T-cell (primary cell): ENCODE measurements at regions of chr5 and their contacts with region 1.

Region 1: GRCh38 chr5:6659941-6660684 is 26.9 kb downstream of the SRD5A1 start:
- DNase-seq: no peak
- ATAC-seq: no peak
- H3K4me3 ChIP-seq: no peak overlapping the region
- H3K4me3 Mint-ChIP-seq: peak overlapping the region in 1 of 3 donors; percentile 47
- H3K27ac ChIP-seq: no peak overlapping the region
- H3K27ac Mint-ChIP-seq: no peak overlapping the region
- H3K4me1 ChIP-seq: no peaks in the 10 kb centered on the region
- H3K4me1 Mint-ChIP-seq: peaks cover 0 to 4% (median 0%) of the 10 kb centered on the region in 3 donors
- H3K27me3 ChIP-seq: no peaks in the 10 kb centered on the region
- H3K27me3 Mint-ChIP-seq: no peaks in the 10 kb centered on the region

Region 2: DNA sequence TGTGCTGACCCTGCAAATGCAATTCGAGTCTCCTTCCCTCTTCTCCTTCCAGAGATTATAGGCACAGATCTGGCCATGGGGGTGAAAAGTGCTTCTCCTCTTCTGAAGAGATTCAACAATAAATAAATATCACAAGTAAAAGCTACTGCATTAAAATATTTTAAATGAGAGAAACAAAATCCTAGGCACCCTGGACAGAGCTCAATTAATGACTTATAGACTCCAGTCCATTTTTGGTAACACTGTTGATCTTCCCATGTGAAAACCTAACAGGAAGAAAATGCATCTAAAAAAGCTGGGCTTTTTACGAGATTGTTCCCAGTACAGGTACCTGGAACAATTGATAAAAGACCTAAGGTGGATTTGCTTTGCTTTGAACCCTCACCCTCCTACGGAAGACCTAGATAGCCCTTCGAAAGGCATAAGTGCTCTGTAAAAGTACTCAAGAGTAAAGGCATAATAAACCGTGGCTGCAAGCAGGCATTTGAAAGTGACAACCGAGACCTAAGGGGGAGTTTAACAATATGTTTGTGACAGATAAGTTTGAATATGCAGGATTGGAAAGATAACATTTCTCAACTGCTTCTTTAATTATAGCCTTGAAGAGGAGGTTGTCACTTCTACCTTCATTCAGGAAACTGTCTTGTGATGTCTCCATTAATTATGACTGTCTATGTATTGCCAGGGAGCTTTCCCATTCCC is 252.4 kb before region 1 on chr5:
- CTCF ChIA-PET with region 1: interaction called in 1 of 2 experiments, 15 read pairs
- POLR2A ChIA-PET with region 1: no interaction called
- DNase-seq: no peak
- ATAC-seq: no peak
- H3K4me3 ChIP-seq: no peak overlapping the region
- H3K4me3 Mint-ChIP-seq: no peak overlapping the region
- H3K27ac ChIP-seq: no peak overlapping the region
- H3K27ac Mint-ChIP-seq: no peak overlapping the region
- H3K4me1 ChIP-seq: no peaks in the 10 kb centered on the region
- H3K4me1 Mint-ChIP-seq: no peaks in the 10 kb centered on the region
- H3K27me3 ChIP-seq: peaks cover 0 to 15% of the 10 kb centered on the region in 2 experiments
- H3K27me3 Mint-ChIP-seq: peaks cover 13 to 18% of the 10 kb centered on the region in 2 donors